ENCODE measurements at regions of chr1 and their contacts with region 1.

Region 1: GRCh38 chr1:18100491-18101063 is 7.0 kb upstream of the IGSF21 start:
- DNase-seq: peak in 1 of 3 donors; percentile 55
- ATAC-seq: peak; percentile 65 to 89 (median 76)
- H3K4me3 ChIP-seq: no peak overlapping the region
- H3K27ac ChIP-seq: no peak overlapping the region
- H3K4me1 ChIP-seq: no peaks in the 10 kb centered on the region
- H3K27me3 ChIP-seq: no peaks in the 10 kb centered on the region
- CTCF ChIP-seq: peak; percentile 78 to 83 (median 82)
- POLR2A ChIP-seq: no peak

Region 2: DNA sequence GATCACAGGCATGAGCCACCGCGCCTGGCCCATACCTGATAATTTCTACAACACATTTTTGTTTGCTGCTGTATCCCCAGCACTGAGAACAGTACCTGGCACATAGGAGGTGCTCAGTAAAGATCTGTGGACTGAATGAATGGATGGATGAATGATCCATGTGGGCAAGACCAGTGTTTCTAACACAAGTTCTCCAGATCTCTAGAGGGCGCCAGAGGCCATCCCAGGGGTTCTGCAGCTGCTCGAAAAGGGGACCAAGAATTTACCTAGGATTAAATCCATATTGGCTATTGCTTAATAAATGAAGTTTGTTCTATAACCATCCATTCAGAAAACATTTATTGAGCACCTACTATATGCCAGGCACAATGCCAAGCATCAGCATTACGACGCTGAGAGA is 177.7 kb before region 1 on chr1:
- intact Hi-C with region 1: loop called in 1 of 2 experiments (anchors 10 kb)
- DNase-seq: peak in 1 of 3 donors; percentile 45
- ATAC-seq: peak in 3 of 4 donors; percentile 27 to 44 (median 44)
- H3K4me3 ChIP-seq: no peak overlapping the region
- H3K27ac ChIP-seq: no peak overlapping the region
- H3K4me1 ChIP-seq: no peaks in the 10 kb centered on the region
- H3K27me3 ChIP-seq: no peaks in the 10 kb centered on the region
- CTCF ChIP-seq: peak; percentile 41 to 59 (median 49)
- POLR2A ChIP-seq: no peak

Region 3: DNA sequence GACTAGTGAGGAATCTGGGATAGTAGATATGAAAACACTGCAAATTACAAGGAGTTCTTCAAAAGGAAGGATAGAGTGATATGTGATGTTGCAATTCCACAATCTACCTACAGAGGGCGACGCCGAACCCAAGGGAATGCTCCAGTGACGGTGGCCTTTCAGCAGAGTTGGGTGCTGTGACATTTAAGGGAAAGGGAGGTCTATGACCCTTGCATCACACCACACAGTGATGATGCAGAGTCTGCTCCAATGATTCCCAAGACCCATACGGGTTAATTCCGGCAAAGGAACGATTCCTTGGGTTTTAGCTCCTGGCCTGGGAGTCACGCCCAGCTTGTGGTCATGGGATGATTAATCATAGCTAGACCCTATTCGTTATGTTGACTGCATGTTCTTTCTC is 116.0 kb before region 1 on chr1:
- intact Hi-C with region 1: loop called in 1 of 2 experiments (anchors 5 kb)
- DNase-seq: no peak
- ATAC-seq: peak; percentile 54 to 71 (median 63)
- H3K4me3 ChIP-seq: no peak overlapping the region
- H3K27ac ChIP-seq: no peak overlapping the region
- H3K4me1 ChIP-seq: no peaks in the 10 kb centered on the region
- H3K27me3 ChIP-seq: no peaks in the 10 kb centered on the region
- CTCF ChIP-seq: peak; percentile 72 to 79 (median 74)
- POLR2A ChIP-seq: no peak

Region 4: GRCh38 chr1:18160290-18160942 is 59.8 kb after region 1 on chr1:
- intact Hi-C with region 1: no loop called
- DNase-seq: peak in 2 of 3 donors; percentile 36 to 51
- ATAC-seq: peak; percentile 68 to 83 (median 74)
- H3K4me3 ChIP-seq: no peak overlapping the region
- H3K27ac ChIP-seq: peak overlapping the region in 1 of 3 donors; percentile 8
- H3K4me1 ChIP-seq: no peaks in the 10 kb centered on the region
- H3K27me3 ChIP-seq: no peaks in the 10 kb centered on the region
- CTCF ChIP-seq: no peak
- POLR2A ChIP-seq: no peak

Measured in right lobe of liver (tissue), 6 donors.